ENCODE measurements at regions of chr9 and their contacts with region 1.

Region 1: GRCh38 chr9:120928483-120929228 is 2.1 kb upstream of the TRAF1 start:
- DNase-seq: peak; percentile 81
- H3K4me3 ChIP-seq: peak overlapping the region; percentile 80
- H3K27ac ChIP-seq: peak overlapping the region; percentile 92
- H3K4me1 ChIP-seq: peaks cover 54% of the 10 kb centered on the region
- H3K27me3 ChIP-seq: no peaks in the 10 kb centered on the region
- CTCF ChIP-seq: peak; percentile 51

Region 2: DNA sequence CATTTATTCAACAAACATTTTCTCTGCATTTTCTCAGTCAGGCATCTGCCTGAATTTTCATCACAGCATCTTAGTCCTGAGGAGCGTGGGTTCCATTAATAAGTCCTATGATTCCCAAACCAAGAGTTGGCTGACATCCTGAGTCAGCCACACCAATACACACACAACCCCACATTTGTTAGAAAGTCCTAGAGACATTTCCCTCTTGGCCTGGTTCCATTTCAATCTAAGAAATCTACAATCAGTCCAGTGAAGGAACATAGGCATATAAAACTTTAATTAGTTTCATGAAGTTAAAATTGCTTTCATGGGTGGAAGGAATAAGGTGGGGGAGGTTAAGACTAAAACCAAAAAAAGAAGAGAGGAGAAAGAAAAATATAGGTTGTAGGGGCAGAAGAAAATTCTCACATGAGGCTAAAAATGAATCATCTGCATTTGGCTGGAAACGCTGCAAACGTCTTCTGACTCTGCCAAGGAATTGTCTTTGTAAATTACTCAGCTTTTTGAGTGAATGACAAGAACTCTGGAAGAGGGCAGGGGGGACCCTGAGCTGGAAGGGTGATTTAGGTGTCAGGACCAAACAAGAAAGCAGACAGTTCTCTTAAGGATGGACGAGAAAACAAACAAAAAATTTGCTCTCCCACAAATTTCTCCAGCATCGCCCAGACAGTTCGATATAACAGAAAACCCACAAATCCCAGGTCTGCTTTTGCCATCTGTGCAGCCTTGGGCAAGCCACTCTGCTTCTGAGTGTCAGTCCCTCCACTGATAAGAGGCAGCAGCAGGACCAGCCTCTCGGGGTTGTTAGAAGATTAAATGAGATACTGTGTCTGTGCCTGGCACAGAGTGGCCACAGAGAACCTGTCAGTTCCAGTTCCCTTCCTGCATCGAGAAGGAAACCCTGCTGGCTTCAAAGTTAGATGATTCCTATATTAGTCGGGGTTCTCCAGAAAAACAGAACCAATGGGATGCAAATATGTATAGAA is 638.4 kb before region 1 on chr9:
- intact Hi-C with region 1: no loop called
- DNase-seq: no peak
- H3K4me3 ChIP-seq: no peak overlapping the region
- H3K27ac ChIP-seq: no peak overlapping the region
- H3K4me1 ChIP-seq: no peaks in the 10 kb centered on the region
- H3K27me3 ChIP-seq: peaks cover 7% of the 10 kb centered on the region
- CTCF ChIP-seq: no peak

Region 3: DNA sequence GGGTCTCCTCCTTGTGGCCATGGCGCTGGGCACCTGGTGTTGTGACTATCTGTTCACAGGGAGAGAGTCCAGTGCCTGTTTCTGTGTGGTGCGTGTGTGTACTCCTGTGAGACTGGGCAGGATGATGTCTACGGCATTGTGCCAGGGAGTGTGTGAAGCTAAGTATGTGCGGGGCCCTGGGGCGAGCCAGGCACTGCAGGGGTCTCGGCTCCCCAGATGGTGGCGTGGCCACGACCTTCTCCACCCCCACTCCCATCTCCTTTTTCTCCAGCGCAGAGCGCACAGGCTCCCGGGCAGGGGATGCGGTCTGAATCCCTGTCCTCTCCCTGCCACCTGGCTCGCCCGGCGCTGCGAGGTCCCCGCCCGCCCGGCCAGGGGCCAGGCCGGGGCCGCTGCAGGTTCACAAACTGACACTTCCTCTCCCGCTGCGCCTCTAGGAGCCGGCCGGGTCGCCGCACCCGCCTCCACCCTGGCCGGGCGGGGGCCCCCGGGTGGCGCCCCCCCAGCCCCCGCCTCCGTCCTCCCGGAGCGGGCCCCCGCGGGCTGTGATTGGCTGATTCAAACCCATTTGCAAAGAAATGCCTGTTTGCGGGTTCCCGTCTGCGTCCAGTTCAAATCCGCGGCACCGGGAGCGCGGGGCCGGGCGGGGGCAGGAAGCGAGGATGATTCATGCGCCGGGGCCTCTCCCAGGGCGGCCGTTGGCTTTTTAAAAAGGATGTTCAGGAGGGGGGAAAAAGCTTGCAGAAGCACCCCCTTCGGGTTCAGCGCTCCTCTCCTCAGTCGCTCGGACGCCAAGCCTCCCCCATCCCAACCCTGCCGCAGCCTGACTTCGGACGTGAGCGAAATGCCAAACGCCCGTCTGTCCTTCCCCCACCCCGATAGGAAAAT is 52.5 kb before region 1 on chr9:
- intact Hi-C with region 1: loop called (anchors 10 kb)
- DNase-seq: peak; percentile 85
- H3K4me3 ChIP-seq: peak overlapping the region; percentile 87
- H3K27ac ChIP-seq: peak overlapping the region; percentile 95
- H3K4me1 ChIP-seq: peaks cover 21% of the 10 kb centered on the region
- H3K27me3 ChIP-seq: no peaks in the 10 kb centered on the region
- CTCF ChIP-seq: no peak

Measured in left ventricle myocardium inferior (tissue), 1 donor.